GM13977 (cell line): ENCODE measurements at regions of chr19 and their contacts with region 1.

Region 1: DNA sequence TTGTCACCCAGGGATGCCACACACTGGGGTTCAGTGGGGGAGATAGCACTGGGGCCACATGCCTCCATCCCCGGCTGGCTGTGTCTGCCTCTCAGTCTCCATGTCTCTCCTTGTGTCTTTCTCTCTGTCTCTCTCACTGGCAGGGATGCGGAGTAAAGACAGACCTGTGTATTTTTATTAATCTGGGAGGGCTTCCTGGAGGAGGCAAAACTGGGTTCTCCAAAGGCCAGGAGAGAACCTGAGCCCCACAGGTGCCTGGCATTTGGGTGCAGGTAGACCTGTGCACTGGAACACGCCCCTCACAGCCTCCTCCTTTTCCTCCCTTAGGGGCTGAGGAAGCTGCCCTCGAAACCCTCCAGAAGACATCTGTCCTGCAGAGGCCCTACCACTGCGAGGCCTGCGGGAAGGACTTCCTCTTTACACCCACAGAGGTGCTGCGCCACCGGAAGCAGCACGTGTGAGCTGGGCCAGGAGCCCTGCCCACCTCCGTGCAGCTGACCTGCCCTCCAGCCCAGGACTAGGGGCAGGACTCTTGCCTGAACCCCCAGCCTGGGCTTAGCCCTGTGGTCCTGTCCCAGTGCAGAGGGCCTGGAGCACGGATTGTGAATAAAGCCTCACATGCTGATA is 32.7 kb downstream of the DHX34 start:
- DNase-seq: peak; percentile 38
- CTCF ChIP-seq: no peak

Region 2: GRCh38 chr19:47305309-47305751 is 76.4 kb before region 1 on chr19:
- in situ Hi-C with region 1: loop called (anchors 10 kb)
- DNase-seq: peak; percentile 45
- CTCF ChIP-seq: peak; percentile 93

Region 3: DNA sequence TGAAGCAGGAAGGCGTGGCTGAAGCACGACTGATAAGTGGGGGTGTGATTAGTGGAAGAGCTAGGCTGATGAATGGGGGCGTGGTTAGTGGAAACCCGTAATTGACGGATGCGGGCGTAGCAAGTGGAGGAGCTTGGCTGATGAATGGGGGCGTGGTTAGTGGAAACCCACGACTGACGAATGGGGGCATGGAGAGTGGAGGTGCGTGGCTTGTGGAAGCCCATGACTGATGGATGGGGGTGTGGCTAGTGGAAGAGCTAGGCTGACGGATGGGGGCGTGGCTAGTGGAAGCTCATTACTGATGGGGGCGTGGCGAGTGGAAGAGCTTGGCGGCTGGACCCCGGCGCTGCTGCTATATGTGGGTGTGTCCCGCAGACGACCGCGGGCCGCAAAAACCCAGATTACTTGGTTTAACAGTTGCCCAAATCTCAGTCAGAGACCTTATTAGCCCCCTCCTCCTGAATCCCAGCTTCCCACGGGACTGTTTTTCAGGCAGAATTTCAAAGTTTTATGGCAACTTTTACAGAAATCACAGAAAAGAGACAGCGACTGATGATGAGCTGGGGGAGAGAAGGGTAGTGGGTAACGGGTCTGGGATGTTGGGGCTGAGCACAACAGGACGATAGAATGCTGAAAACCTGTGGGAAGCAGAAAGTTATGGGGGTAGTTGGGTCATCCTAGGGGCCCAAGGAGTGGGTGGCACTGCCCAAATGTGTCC is 46.6 kb after region 1 on chr19:
- in situ Hi-C with region 1: no loop called
- DNase-seq: peak; percentile 96
- CTCF ChIP-seq: no peak